CD4-positive, alpha-beta T cell (primary cell): ENCODE measurements at regions of chr1 and their contacts with region 1.

Region 1: DNA sequence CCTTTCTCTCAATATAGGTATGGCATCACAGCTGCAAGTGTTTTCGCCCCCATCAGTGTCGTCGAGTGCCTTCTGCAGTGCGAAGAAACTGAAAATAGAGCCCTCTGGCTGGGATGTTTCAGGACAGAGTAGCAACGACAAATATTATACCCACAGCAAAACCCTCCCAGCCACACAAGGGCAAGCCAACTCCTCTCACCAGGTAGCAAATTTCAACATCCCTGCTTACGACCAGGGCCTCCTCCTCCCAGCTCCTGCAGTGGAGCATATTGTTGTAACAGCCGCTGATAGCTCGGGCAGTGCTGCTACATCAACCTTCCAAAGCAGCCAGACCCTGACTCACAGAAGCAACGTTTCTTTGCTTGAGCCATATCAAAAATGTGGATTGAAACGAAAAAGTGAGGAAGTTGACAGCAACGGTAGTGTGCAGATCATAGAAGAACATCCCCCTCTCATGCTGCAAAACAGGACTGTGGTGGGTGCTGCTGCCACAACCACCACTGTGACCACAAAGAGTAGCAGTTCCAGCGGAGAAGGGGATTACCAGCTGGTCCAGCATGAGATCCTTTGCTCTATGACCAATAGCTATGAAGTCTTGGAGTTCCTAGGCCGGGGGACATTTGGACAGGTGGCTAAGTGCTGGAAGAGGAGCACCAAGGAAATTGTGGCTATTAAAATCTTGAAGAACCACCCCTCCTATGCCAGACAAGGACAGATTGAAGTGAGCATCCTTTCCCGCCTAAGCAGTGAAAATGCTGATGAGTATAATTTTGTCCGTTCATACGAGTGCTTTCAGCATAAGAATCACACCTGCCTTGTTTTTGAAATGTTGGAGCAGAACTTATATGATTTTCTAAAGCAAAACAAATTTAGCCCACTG is 11.5 kb downstream of the HIPK1 start:
- DNase-seq: peak in 6 of 14 experiments; percentile 17 to 80 (median 34)
- ATAC-seq: peak; percentile 45
- H3K4me3 ChIP-seq: peak overlapping the region; percentile 27
- H3K4me3 Mint-ChIP-seq: peak overlapping the region; percentile 82
- H3K27ac ChIP-seq: peak overlapping the region; percentile 33 to 45
- H3K27ac Mint-ChIP-seq: peak overlapping the region; percentile 78
- H3K4me1 ChIP-seq: peaks cover 57% of the 10 kb centered on the region
- H3K4me1 Mint-ChIP-seq: peaks cover 71% of the 10 kb centered on the region
- H3K27me3 ChIP-seq: no peaks in the 10 kb centered on the region
- H3K27me3 Mint-ChIP-seq: no peaks in the 10 kb centered on the region
- CTCF ChIP-seq: no peak

Region 2: GRCh38 chr1:113191579-113192076 is 749.0 kb before region 1 on chr1:
- CTCF ChIA-PET with region 1: no interaction called
- POLR2A ChIA-PET with region 1: no interaction called
- intact Hi-C with region 1: no loop called
- DNase-seq: peak in 2 of 14 experiments; percentile 7 to 13
- ATAC-seq: no peak
- H3K4me3 ChIP-seq: no peak overlapping the region
- H3K4me3 Mint-ChIP-seq: no peak overlapping the region
- H3K27ac ChIP-seq: no peak overlapping the region
- H3K27ac Mint-ChIP-seq: no peak overlapping the region
- H3K4me1 ChIP-seq: no peaks in the 10 kb centered on the region
- H3K4me1 Mint-ChIP-seq: no peaks in the 10 kb centered on the region
- H3K27me3 ChIP-seq: peaks cover 0 to 2% of the 10 kb centered on the region in 2 experiments
- H3K27me3 Mint-ChIP-seq: peaks cover 18% of the 10 kb centered on the region
- CTCF ChIP-seq: no peak

Region 3: GRCh38 chr1:113963281-113963906 is 22.8 kb after region 1 on chr1:
- CTCF ChIA-PET with region 1: no interaction called
- POLR2A ChIA-PET with region 1: interaction called, 10 read pairs
- intact Hi-C with region 1: no loop called
- DNase-seq: peak in 2 of 14 experiments; percentile 36 to 39
- ATAC-seq: peak; percentile 56
- H3K4me3 ChIP-seq: no peak overlapping the region
- H3K4me3 Mint-ChIP-seq: no peak overlapping the region
- H3K27ac ChIP-seq: no peak overlapping the region
- H3K27ac Mint-ChIP-seq: peak overlapping the region; percentile 65
- H3K4me1 ChIP-seq: no peaks in the 10 kb centered on the region
- H3K4me1 Mint-ChIP-seq: peaks cover 26% of the 10 kb centered on the region
- H3K27me3 ChIP-seq: no peaks in the 10 kb centered on the region
- H3K27me3 Mint-ChIP-seq: no peaks in the 10 kb centered on the region
- CTCF ChIP-seq: no peak

Region 4: GRCh38 chr1:113972954-113973353 is 32.3 kb after region 1 on chr1:
- CTCF ChIA-PET with region 1: interaction called, 3 read pairs
- POLR2A ChIA-PET with region 1: no interaction called
- intact Hi-C with region 1: loop called in 1 of 2 experiments (anchors 5 kb)
- DNase-seq: no peak
- ATAC-seq: no peak
- H3K4me3 ChIP-seq: no peak overlapping the region
- H3K4me3 Mint-ChIP-seq: no peak overlapping the region
- H3K27ac ChIP-seq: no peak overlapping the region
- H3K27ac Mint-ChIP-seq: peak overlapping the region; percentile 61
- H3K4me1 ChIP-seq: peaks cover 9% of the 10 kb centered on the region
- H3K4me1 Mint-ChIP-seq: peaks cover 47% of the 10 kb centered on the region
- H3K27me3 ChIP-seq: no peaks in the 10 kb centered on the region
- H3K27me3 Mint-ChIP-seq: no peaks in the 10 kb centered on the region
- CTCF ChIP-seq: no peak